ENCODE measurements at regions of chr7 and their contacts with region 1.

Region 1: DNA sequence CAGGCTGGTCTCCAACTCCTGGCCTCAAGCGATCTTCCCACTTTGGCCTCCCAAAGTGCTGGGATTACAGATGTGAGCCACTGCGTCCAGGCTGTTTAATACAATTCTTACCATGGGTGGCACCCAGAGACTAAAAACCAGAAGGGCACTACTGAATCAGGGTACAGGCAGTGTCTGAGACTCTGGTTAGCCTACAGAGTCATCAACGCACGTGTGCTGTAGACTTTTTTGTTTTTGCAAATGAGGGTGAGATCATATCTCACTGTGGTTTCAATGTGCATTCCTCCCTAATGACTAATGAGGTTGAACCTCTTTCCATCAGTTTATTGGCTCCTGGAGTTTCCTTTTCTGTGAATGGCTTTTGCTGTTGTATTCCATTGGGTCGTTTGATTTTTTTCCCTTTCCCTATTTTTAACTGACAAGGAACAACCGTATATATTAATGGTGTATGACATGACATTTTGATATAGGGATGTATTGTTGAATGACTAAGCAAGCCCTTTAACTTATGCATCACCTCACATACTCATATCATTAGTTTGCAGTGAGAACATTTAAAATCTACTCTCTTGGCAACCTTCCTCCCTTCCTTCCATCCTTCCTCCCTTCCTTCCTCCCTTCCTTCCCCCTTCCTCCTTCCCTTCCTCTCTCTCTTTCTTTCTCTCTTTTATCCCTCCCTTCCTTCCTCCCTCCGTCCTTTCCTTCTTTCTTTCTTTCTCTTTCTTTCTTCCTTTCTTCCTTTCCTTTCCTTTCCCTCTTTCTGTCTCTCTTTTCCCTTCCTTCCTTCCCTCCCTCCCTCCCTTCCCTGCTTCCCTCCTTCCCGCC is 9.3 kb upstream of the METTL27 start:
- DNase-seq: no peak
- H3K4me3 ChIP-seq: no peak overlapping the region
- H3K27ac ChIP-seq: peak overlapping the region; percentile 70
- H3K4me1 ChIP-seq: peaks cover 8% of the 10 kb centered on the region
- H3K27me3 ChIP-seq: no peaks in the 10 kb centered on the region
- CTCF ChIP-seq: no peak

Region 2: GRCh38 chr7:73612598-73613269 is 238.9 kb before region 1 on chr7:
- intact Hi-C with region 1: loop called (anchors 10 kb)
- DNase-seq: peak; percentile 85
- H3K4me3 ChIP-seq: no peak overlapping the region
- H3K27ac ChIP-seq: peak overlapping the region; percentile 8
- H3K4me1 ChIP-seq: no peaks in the 10 kb centered on the region
- H3K27me3 ChIP-seq: no peaks in the 10 kb centered on the region
- CTCF ChIP-seq: no peak

Region 3: GRCh38 chr7:73894733-73895551 is 43.3 kb after region 1 on chr7:
- intact Hi-C with region 1: no loop called
- DNase-seq: no peak
- H3K4me3 ChIP-seq: no peak overlapping the region
- H3K27ac ChIP-seq: no peak overlapping the region
- H3K4me1 ChIP-seq: no peaks in the 10 kb centered on the region
- H3K27me3 ChIP-seq: no peaks in the 10 kb centered on the region
- CTCF ChIP-seq: no peak

Measured in colonic mucosa (tissue), 4 donors.